Heart right ventricle (tissue), 16 donors: ENCODE measurements at regions of chr6 and their contacts with region 1.

Region 1: DNA sequence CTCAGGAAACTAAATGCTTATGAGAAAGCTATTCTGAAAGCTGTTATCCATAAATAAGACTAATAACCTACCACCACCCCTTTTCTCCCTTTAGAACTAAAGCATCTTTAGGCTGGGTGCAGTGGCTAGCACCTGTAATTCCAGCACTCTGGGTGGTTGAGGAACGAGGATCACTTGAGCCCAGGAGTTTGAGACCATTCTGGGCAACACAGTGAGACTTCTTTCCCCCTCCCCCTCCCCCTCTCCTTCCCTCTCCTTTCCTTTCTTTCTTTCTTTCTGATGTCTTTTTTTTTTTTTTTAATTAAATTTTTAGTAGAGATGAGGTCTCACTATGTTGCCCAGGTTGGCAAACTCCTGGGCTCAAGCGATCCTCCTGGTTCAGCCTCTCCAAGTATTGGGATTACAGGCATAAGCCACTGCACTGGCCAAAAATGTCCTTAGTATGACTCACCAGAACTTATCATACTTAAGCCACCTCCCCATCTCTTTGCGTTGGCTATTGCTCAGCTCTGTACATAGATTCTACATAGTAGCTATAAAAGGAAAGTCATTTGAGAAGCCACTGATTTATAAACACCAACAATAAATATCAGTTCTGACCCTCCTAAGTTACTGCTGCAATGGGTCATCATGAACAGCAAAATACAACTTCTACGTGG is 54.8 kb upstream of the SPDEF start:
- DNase-seq: no peak
- ATAC-seq: peak in 3 of 8 donors; percentile 4 to 62 (median 46)
- H3K4me3 ChIP-seq: no peak overlapping the region
- H3K27ac ChIP-seq: peak overlapping the region in 3 of 10 donors; percentile 11 to 64 (median 35)
- H3K4me1 ChIP-seq: peaks cover 0 to 32% (median 23%) of the 10 kb centered on the region in 9 donors
- H3K27me3 ChIP-seq: no peaks in the 10 kb centered on the region
- CTCF ChIP-seq: no peak

Region 2: DNA sequence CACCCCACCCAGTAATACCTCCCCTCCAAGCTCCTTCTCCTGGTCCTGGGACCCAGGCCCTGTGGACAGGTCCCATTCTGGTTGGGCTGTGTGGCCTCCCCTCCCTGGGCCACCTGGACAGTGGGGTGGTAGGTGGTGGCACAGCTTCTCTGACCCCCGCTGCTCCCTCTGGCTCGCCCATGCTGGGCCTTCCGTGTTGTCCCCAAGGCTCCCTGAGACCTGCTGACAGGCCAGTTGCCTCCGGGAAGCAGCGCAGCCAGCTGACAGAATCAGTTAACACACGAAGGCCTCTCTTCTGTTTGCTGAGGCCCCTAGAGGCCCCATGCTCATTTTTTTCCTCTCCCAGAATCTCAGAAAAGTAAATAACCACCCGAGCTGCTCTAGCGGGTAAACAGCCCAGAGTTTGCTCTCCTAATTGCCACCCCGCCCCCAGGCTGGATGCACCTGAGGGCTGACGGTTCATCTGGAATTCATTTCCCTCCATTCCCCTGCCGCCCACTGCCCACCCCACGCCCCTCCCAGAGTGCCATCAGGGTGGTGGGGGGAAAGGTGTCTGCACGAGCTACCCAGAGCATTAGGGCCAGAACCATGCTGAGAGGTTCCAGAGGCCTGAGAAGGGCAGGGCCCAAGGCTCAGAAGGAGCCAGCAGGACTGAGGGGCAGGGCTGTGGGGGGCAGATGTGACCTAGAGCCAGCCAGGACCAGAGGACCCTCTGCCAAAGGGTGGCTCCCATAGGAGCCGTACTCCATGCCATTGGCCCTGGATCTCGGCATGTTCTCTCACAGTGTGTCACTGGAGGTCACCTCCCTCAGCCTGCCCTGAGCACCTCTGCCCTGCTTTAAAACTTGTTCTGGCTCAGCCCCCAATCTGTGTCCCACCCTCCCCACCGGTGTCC is 622.6 kb before region 1 on chr6:
- intact Hi-C with region 1: no loop called
- DNase-seq: no peak
- ATAC-seq: no peak
- H3K4me3 ChIP-seq: no peak overlapping the region
- H3K27ac ChIP-seq: no peak overlapping the region
- H3K4me1 ChIP-seq: no peaks in the 10 kb centered on the region
- H3K27me3 ChIP-seq: peaks cover 7 to 83% (median 47%) of the 10 kb centered on the region in 7 donors
- CTCF ChIP-seq: no peak

Region 3: GRCh38 chr6:34196126-34196830 is 414.7 kb before region 1 on chr6:
- intact Hi-C with region 1: loop called in 5 of 10 experiments (anchors 10 kb)
- DNase-seq: peak; percentile 85 to 92
- ATAC-seq: peak; percentile 98 to 99 (median 99)
- H3K4me3 ChIP-seq: peak overlapping the region in 9 of 10 donors; percentile 41 to 72 (median 56)
- H3K27ac ChIP-seq: peak overlapping the region in 1 of 10 donors; percentile 26
- H3K4me1 ChIP-seq: peaks cover 0 to 10% (median 5%) of the 10 kb centered on the region in 9 donors
- H3K27me3 ChIP-seq: peaks cover 0 to 4% (median 0%) of the 10 kb centered on the region in 7 donors
- CTCF ChIP-seq: peak; percentile 95 to 99 (median 98)

Region 4: DNA sequence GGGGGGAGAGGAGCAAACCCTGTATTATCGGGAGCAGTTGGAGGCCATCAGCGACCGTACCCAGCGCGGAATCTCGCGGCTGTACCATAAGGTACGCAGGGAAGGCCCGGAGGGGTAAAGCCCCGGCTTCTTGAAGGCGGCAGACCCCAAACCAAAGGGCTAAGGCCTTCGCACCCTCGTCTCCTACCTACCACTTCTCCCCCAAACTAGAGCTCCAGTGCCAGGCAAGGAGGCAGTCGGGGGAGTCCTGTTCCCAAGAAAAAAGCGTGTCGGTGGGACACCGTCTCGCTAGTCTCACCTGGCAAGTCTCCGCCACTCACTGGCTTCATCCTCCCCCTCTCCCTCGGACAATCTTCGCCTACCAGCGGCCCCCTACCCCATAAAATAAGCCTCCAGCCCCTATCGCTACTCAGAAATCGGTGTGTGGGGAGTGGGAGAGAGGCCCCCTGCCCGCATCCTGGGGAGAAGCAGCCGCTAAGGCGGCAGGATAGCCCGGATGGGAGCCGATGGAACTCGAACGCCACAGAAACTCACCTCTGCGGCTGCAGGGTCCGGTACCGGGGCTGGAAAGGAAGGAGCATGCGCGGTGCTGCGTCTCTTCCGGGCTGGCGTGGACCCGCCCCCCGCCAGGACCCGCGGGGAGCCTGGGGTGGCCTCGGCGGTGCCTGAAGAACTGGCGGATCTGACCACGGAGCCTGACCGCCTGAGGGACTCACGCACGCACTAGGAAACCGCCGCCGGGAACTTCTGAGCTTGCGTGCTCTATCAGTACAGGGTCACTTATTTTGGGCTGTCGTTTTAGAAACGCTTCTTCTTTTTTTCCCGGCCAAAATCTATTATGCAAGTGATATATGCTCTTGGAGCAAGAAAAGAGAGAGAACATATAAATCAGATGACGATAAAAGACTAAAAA is 185.2 kb before region 1 on chr6 and contains the start of gene RPS10:
- intact Hi-C with region 1: loop called in 1 of 10 experiments (anchors 5 kb)
- DNase-seq: peak; percentile 93 to 96
- ATAC-seq: peak; percentile 98 to 100 (median 99)
- H3K4me3 ChIP-seq: peak within 1 kb of the TSS; percentile 66 to 92 (median 75)
- H3K27ac ChIP-seq: peak within 1 kb of the TSS; percentile 68 to 89 (median 84)
- H3K4me1 ChIP-seq: peaks cover 0 to 25% (median 16%) of the 10 kb centered on the region in 9 donors
- H3K27me3 ChIP-seq: no peaks in the 10 kb centered on the region
- CTCF ChIP-seq: peak in 1 of 9 donors; percentile 39
- total RNA-seq, gene RPS10: 551 to 913 (median 607) TPM

Region 5: DNA sequence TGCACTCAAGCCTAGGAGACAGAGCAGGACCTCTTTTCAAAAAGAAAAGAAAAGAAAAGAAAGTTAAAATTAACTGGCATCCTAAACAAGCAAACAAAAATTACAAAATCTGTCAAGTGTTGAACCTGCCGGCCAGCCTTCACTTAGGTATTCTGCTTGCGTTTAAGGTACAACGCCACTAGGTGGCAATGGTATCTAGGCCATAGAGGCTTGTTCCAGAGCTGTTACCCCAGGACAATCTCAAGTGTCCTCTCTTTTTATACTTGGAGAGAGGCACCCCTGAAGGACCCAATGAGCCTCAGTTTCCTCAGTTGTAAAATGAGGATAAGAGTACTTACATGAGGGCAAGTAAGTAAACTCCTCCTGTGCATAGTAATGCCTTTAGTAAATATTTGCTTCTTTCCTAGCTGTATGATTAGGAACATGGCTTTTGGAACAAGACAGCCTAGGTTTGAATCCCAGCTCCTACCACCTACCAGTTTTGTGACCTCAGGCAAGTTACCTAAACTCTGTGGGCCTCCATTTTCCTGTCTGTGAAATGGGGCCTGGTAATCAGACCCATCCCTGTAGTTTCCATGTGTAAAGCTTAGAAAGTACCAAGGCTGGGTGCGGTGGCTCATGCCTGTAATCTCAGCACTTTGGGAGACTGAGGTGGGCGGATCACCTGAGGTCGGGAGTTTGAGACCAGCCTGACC is 150.9 kb before region 1 on chr6:
- intact Hi-C with region 1: loop called in 7 of 10 experiments (anchors 1 to 10 kb)
- DNase-seq: peak in 1 of 2 donors; percentile 19
- ATAC-seq: peak in 5 of 8 donors; percentile 37 to 51 (median 43)
- H3K4me3 ChIP-seq: no peak overlapping the region
- H3K27ac ChIP-seq: no peak overlapping the region
- H3K4me1 ChIP-seq: peaks cover 0 to 3% (median 0%) of the 10 kb centered on the region in 9 donors
- H3K27me3 ChIP-seq: peaks cover 0 to 15% (median 12%) of the 10 kb centered on the region in 7 donors
- CTCF ChIP-seq: peak; percentile 13 to 75 (median 65)

Region 6: GRCh38 chr6:34526992-34527728 is 83.8 kb before region 1 on chr6:
- intact Hi-C with region 1: loop called in 8 of 10 experiments (anchors 1 to 5 kb)
- DNase-seq: peak; percentile 96 to 97
- ATAC-seq: peak; percentile 84 to 95 (median 94)
- H3K4me3 ChIP-seq: peak overlapping the region in 8 of 10 donors; percentile 16 to 48 (median 40)
- H3K27ac ChIP-seq: peak overlapping the region in 7 of 10 donors; percentile 13 to 55 (median 52)
- H3K4me1 ChIP-seq: peaks cover 5 to 21% (median 7%) of the 10 kb centered on the region in 9 donors
- H3K27me3 ChIP-seq: no peaks in the 10 kb centered on the region
- CTCF ChIP-seq: peak; percentile 47 to 94 (median 81)